Esophagus muscularis mucosa (tissue), 4 donors: ENCODE measurements at regions of chr7 and their contacts with region 1.

Region 1: DNA sequence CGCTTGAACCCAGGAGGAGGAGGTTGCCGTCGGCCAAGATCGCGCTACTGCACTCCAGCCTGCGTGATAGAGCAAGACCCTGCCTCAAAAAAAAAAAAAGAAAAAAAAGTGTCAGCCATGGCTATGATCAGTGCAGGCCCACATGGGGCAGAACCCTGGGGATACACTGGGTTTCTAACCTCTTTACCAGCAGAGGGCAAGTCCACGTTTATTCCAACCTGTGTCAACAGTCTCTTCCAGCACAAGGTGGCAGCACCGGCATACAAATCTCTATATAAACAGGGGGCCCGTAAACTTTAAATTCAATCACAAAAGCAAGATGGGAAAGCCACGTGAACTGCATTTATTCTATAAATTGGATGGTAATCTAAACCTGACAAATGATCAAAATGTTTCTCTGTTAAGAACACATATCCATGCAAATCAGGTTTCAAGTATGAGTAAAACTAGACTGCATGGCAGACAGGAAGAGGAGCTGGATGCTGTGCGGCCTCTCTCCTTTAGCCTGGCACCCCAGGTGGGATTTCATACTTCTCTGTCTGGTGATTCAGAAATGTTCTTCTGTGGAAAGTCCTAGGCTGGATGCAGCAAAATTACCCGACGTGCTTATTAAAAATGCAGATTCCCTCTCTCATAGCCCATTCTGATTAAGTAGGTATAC is 60.0 kb upstream of the STEAP1B start:
- DNase-seq: peak; percentile 91
- H3K4me3 ChIP-seq: no peak overlapping the region
- H3K27ac ChIP-seq: peak overlapping the region; percentile 66 to 80 (median 70)
- H3K4me1 ChIP-seq: peaks cover 42 to 53% (median 52%) of the 10 kb centered on the region in 4 donors
- H3K27me3 ChIP-seq: no peaks in the 10 kb centered on the region
- CTCF ChIP-seq: peak; percentile 92 to 94 (median 93)
- EP300 ChIP-seq: no peak
- POLR2A ChIP-seq: no peak

Region 2: DNA sequence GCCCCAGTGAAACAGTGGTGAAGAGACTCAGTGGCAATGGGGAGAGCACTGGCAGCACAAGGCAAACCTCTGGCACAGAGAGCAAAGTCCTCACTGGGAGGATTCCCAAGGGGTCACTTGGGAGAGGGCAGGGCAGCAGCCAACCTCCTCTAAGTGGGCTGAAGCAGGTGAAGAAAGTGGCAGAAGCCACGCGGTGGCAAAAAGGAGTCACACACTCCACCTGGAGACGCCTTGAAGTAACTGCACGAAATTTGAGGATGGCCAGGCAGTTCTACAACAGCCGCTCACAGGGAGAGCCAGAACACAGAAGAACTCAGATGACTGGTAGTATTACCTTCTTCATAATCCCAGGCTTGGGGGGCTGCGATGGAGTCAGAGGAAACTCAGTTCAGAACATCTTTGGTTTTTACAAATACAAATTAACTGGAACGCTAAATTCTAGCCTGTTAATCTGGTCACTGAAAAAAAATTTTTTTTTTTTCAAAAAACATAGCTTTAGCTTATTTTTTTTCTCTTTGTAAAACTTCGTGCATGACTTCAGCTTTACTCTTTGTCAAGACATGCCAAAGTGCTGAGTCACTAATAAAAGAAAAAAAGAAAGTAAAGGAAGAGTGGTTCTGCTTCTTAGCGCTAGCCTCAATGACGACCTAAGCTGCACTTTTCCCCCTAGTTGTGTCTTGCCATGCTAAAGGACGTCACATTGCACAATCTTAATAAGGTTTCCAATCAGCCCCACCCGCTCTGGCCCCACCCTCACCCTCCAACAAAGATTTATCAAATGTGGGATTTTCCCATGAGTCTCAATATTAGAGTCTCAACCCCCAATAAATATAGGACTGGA is 166.6 kb after region 1 on chr7:
- intact Hi-C with region 1: loop called (anchors 2 kb)
- DNase-seq: no peak
- H3K4me3 ChIP-seq: peak overlapping the region; percentile 46 to 59 (median 50)
- H3K27ac ChIP-seq: peak overlapping the region; percentile 77 to 87 (median 84)
- H3K4me1 ChIP-seq: peaks cover 57 to 82% (median 77%) of the 10 kb centered on the region in 4 donors
- H3K27me3 ChIP-seq: no peaks in the 10 kb centered on the region
- CTCF ChIP-seq: peak; percentile 26 to 65 (median 33)
- EP300 ChIP-seq: no peak
- POLR2A ChIP-seq: no peak

Region 3: GRCh38 chr7:22782616-22783232 is 222.8 kb after region 1 on chr7:
- intact Hi-C with region 1: loop called (anchors 1 kb)
- DNase-seq: no peak
- H3K4me3 ChIP-seq: no peak overlapping the region
- H3K27ac ChIP-seq: no peak overlapping the region
- H3K4me1 ChIP-seq: peaks cover 0 to 10% (median 3%) of the 10 kb centered on the region in 4 donors
- H3K27me3 ChIP-seq: no peaks in the 10 kb centered on the region
- CTCF ChIP-seq: peak; percentile 67 to 79 (median 68)
- EP300 ChIP-seq: no peak
- POLR2A ChIP-seq: no peak

Region 4: GRCh38 chr7:22854158-22855048 is 294.4 kb after region 1 on chr7:
- intact Hi-C with region 1: loop called (anchors 10 kb)
- DNase-seq: peak; percentile 98
- H3K4me3 ChIP-seq: peak overlapping the region; percentile 64 to 86 (median 81)
- H3K27ac ChIP-seq: peak overlapping the region; percentile 89 to 98 (median 98)
- H3K4me1 ChIP-seq: peaks cover 31 to 61% (median 58%) of the 10 kb centered on the region in 4 donors
- H3K27me3 ChIP-seq: no peaks in the 10 kb centered on the region
- CTCF ChIP-seq: peak in 1 of 3 experiments; percentile 55
- EP300 ChIP-seq: no peak
- POLR2A ChIP-seq: peak; percentile 83

Region 5: GRCh38 chr7:23055582-23056178 is 495.7 kb after region 1 on chr7:
- intact Hi-C with region 1: loop called (anchors 5 kb)
- DNase-seq: no peak
- H3K4me3 ChIP-seq: no peak overlapping the region
- H3K27ac ChIP-seq: no peak overlapping the region
- H3K4me1 ChIP-seq: peaks cover 0 to 10% (median 7%) of the 10 kb centered on the region in 4 donors
- H3K27me3 ChIP-seq: no peaks in the 10 kb centered on the region
- CTCF ChIP-seq: peak; percentile 76 to 91 (median 88)
- EP300 ChIP-seq: no peak
- POLR2A ChIP-seq: no peak